Natural killer cell (primary cell): ENCODE measurements at regions of chr17 and their contacts with region 1.

Region 1: GRCh38 chr17:28644985-28645939 is at the start of gene BLTP2:
- DNase-seq: peak; percentile 90 to 98
- ATAC-seq: peak; percentile 96 to 100 (median 97)
- H3K4me3 ChIP-seq: peak within 1 kb of the TSS; percentile 82
- H3K4me3 Mint-ChIP-seq: peak within 1 kb of the TSS; percentile 98
- H3K27ac ChIP-seq: peak within 1 kb of the TSS; percentile 98
- H3K27ac Mint-ChIP-seq: peak within 1 kb of the TSS; percentile 92 to 98
- H3K4me1 ChIP-seq: peaks cover 36% of the 10 kb centered on the region
- H3K4me1 Mint-ChIP-seq: peaks cover 36 to 38% of the 10 kb centered on the region in 2 donors
- H3K27me3 ChIP-seq: no peaks in the 10 kb centered on the region
- H3K27me3 Mint-ChIP-seq: no peaks in the 10 kb centered on the region
- CTCF ChIP-seq: no peak
- total RNA-seq, gene BLTP2: 169 to 199 (median 188) TPM

Region 2: DNA sequence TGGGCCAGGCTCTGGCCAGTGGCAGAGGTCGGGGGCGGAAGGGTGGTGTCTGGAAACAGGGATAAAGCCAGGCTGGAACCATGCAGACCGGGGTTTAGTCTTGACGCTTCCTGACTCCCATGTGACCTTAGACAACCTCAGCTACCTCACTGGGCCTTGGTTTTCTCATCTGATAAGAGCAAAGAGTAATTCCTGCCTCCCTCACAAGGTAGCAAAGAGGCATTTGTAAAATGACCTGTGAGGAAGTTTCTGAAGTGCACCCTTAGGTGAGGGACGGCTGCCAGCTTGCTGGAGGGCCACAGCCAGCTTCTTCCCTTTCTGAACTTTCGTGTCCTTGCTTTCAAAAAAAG is 404.3 kb before region 1 on chr17:
- intact Hi-C with region 1: no loop called
- DNase-seq: no peak
- ATAC-seq: no peak
- H3K4me3 ChIP-seq: no peak overlapping the region
- H3K4me3 Mint-ChIP-seq: no peak overlapping the region
- H3K27ac ChIP-seq: no peak overlapping the region
- H3K27ac Mint-ChIP-seq: no peak overlapping the region
- H3K4me1 ChIP-seq: no peaks in the 10 kb centered on the region
- H3K4me1 Mint-ChIP-seq: no peaks in the 10 kb centered on the region
- H3K27me3 ChIP-seq: no peaks in the 10 kb centered on the region
- H3K27me3 Mint-ChIP-seq: peaks cover 2 to 8% of the 10 kb centered on the region in 2 donors
- CTCF ChIP-seq: no peak

Region 3: DNA sequence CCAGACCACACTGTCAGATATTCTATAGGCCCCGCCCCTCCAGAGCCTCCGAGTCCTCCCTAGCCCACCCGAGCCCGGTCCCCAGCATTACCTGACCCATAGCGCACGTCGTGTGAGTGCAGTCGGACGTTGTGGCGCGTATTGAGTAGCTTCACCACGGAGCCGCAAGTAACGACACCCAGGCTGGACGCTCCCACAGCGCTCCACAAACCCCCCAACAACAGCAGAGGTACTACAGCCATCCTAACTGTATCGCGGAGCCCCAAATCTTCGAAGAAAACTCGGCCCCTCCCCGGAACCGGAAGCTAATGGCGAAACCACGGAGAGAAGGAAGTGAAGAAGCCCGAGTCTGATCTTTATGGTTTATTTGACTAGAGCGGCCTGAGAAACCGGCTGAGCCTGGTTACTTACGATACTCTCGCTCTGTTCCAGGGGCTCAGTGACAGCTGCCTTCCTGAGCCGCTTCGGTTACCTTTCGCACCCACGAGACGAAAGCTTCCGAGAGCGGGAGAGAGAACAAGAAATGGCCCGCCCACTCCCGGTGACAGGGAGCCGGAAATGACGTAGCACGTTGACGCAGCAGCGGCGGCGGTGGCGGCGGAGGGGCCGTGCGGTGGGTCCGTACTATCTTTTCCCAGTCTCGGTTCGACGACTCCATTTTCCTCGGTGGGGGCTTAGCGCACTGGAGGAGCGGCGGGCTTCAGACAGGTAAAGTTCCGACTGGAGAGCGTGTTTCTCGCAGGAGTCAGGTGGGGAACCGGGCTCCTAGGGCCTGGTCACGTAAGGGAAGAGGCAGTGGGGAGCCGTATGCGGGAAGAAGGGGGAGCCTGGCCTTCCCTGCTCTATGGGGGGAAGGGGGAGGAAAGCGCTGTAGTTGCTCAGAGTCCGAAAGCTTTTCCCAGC is 16.6 kb after region 1 on chr17 and contains the starts of genes SDF2 and SUPT6H:
- intact Hi-C with region 1: loop called (anchors 1 kb)
- DNase-seq: peak; percentile 95 to 96
- ATAC-seq: peak; percentile 81 to 91 (median 85)
- H3K4me3 ChIP-seq: peak within 1 kb of the TSS; percentile 86
- H3K4me3 Mint-ChIP-seq: peak within 1 kb of the TSS; percentile 98
- H3K27ac ChIP-seq: peak within 1 kb of the TSS; percentile 93
- H3K27ac Mint-ChIP-seq: peak within 1 kb of the TSS; percentile 100
- H3K4me1 ChIP-seq: peaks cover 10% of the 10 kb centered on the region
- H3K4me1 Mint-ChIP-seq: peaks cover 55 to 57% of the 10 kb centered on the region in 2 donors
- H3K27me3 ChIP-seq: no peaks in the 10 kb centered on the region
- H3K27me3 Mint-ChIP-seq: no peaks in the 10 kb centered on the region
- CTCF ChIP-seq: no peak
- total RNA-seq, gene SDF2: 53.0 to 65.3 (median 53.7) TPM
- total RNA-seq, gene SUPT6H: 170 to 184 (median 177) TPM

Region 4: GRCh38 chr17:28675980-28676379 is 30.7 kb after region 1 on chr17:
- intact Hi-C with region 1: loop called (anchors 1 kb)
- DNase-seq: peak in 1 of 2 donors; percentile 46
- ATAC-seq: peak in 2 of 3 donors; percentile 34 to 38
- H3K4me3 ChIP-seq: no peak overlapping the region
- H3K4me3 Mint-ChIP-seq: no peak overlapping the region
- H3K27ac ChIP-seq: no peak overlapping the region
- H3K27ac Mint-ChIP-seq: no peak overlapping the region
- H3K4me1 ChIP-seq: no peaks in the 10 kb centered on the region
- H3K4me1 Mint-ChIP-seq: no peaks in the 10 kb centered on the region
- H3K27me3 ChIP-seq: no peaks in the 10 kb centered on the region
- H3K27me3 Mint-ChIP-seq: no peaks in the 10 kb centered on the region
- CTCF ChIP-seq: peak; percentile 22

Region 5: GRCh38 chr17:28717578-28718333 is 72.5 kb after region 1 on chr17 and contains the start of gene RAB34:
- intact Hi-C with region 1: loop called (anchors 2 kb)
- DNase-seq: peak in 1 of 2 donors; percentile 37
- ATAC-seq: no peak
- H3K4me3 ChIP-seq: peak within 1 kb of the TSS; percentile 26
- H3K4me3 Mint-ChIP-seq: peak within 1 kb of the TSS; percentile 40
- H3K27ac ChIP-seq: no peak within 1 kb of the TSS
- H3K27ac Mint-ChIP-seq: peak within 1 kb of the TSS; percentile 3 to 16
- H3K4me1 ChIP-seq: peaks cover 47% of the 10 kb centered on the region
- H3K4me1 Mint-ChIP-seq: peaks cover 17 to 36% of the 10 kb centered on the region in 2 donors
- H3K27me3 ChIP-seq: peaks cover 14% of the 10 kb centered on the region
- H3K27me3 Mint-ChIP-seq: peaks cover 15 to 28% of the 10 kb centered on the region in 2 donors
- CTCF ChIP-seq: no peak
- total RNA-seq, gene RAB34: 3.7 to 12.9 (median 3.8) TPM

Region 6: DNA sequence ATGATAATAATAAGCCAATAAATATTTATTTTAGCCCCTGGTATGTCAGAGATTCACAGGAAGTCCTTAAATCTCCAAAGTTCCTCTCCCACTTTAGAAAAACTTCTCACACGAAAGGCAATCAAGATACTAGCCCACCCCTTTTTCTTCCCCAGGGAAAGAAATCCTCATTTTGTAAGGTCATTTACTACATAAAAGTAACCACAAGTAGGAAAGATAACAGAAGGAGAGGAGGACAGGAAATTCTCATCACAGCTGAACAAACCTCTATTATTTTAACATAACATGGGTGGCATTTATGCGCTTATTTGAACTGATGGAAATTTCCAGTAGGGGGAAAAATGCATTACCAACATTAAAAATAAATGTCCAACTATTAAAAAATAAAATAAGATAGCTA is 194.0 kb after region 1 on chr17:
- intact Hi-C with region 1: no loop called
- DNase-seq: no peak
- ATAC-seq: no peak
- H3K4me3 ChIP-seq: no peak overlapping the region
- H3K4me3 Mint-ChIP-seq: no peak overlapping the region
- H3K27ac ChIP-seq: no peak overlapping the region
- H3K27ac Mint-ChIP-seq: no peak overlapping the region
- H3K4me1 ChIP-seq: peaks cover 17% of the 10 kb centered on the region
- H3K4me1 Mint-ChIP-seq: peaks cover 13 to 29% of the 10 kb centered on the region in 2 donors
- H3K27me3 ChIP-seq: no peaks in the 10 kb centered on the region
- H3K27me3 Mint-ChIP-seq: no peaks in the 10 kb centered on the region
- CTCF ChIP-seq: no peak

Region 7: DNA sequence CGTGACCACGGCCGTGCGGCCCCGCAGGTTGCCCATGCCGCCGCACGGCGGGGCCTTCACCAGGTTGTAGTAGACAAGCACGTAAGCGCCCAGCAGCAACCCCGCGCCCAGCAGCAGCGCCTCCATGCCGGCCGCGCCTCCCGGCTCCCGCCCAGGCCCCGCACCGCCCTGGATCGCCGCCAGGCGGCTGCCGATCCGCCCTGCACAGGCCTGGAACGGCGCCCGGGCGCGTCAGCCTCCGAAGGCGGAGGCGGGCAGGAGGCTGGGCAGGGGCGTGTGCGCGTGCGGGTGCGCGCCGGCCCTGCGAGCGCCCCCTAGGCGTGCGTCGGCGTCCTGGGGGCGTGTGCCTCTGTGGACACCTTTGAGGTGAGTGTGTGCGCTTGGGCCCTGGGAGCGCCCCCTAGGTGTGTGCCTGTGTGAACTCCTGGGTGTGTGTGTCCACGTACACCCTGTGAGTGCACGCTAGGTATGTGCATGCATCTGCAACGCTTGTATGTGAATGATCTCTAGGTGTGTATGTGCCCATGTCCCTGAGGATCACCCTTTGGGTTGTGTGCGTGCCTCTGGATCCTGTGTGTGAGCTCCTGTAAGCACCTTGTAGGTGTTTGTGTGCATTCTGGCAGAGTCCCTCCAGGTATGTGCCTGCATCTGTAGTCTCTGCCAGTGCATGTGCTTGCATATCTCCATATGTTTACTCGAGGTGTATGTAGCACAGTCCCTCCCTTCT is 257.7 kb after region 1 on chr17 and contains the start of gene DHRS13:
- intact Hi-C with region 1: loop called (anchors 5 kb)
- DNase-seq: peak; percentile 92 to 98
- ATAC-seq: peak; percentile 92 to 99 (median 95)
- H3K4me3 ChIP-seq: peak within 1 kb of the TSS; percentile 69
- H3K4me3 Mint-ChIP-seq: peak within 1 kb of the TSS; percentile 83
- H3K27ac ChIP-seq: peak within 1 kb of the TSS; percentile 48
- H3K27ac Mint-ChIP-seq: peak within 1 kb of the TSS; percentile 69 to 84
- H3K4me1 ChIP-seq: peaks cover 30% of the 10 kb centered on the region
- H3K4me1 Mint-ChIP-seq: peaks cover 19 to 47% of the 10 kb centered on the region in 2 donors
- H3K27me3 ChIP-seq: no peaks in the 10 kb centered on the region
- H3K27me3 Mint-ChIP-seq: no peaks in the 10 kb centered on the region
- CTCF ChIP-seq: peak; percentile 99
- total RNA-seq, gene DHRS13: 22.5 to 27.3 (median 23.2) TPM